Activated CD4-positive, alpha-beta T cell treated with anti-CD3 and anti-CD28 coated beads, Interleukin-2, amount 10 ng/mL, durations not matched to agents 24 days and 14 days (primary cell): ENCODE measurements at regions of chr3 and their contacts with region 1.

Region 1: GRCh38 chr3:30548600-30548999 is 57.8 kb upstream of the TGFBR2 start:
- DNase-seq: peak; percentile 68
- H3K4me3 Mint-ChIP-seq: no peak overlapping the region
- H3K27ac Mint-ChIP-seq: no peak overlapping the region
- H3K4me1 Mint-ChIP-seq: peaks cover 10% of the 10 kb centered on the region
- H3K27me3 Mint-ChIP-seq: no peaks in the 10 kb centered on the region

Region 2: DNA sequence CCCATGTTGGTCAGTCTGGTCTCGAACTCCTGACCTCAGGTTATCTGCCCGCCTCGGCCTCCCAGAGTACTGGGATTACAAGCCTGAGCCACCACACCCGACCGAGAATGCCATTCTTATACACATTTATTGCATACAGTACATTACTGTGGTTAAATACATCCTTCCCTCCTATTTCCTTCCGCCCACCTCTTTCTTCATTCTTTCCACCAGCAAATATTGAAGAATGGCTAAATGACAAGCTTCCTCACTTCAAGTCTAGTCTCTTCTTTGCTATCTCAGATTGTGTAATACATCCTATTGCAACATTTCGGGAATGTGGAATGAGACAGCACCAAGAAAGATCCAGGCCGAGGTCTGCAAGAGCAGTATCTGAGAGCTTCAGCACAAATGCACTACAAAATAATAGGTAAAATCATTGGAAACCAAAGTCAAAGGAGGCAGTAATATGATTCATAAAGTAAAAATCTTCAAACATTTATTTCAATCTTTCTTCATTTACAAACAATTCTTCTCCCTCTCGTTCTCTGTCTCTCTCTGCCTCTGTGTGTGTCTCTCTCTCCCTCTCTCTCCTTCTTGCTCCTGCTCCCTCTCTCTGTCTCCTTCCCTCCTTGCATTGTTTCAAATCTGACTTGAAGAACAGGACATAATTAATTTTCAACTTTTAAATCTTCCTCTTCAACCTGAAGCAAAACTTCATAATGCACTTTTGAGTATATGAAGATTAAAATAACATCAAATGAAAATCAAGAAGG is 36.9 kb before region 1 on chr3:
- intact Hi-C with region 1: loop called (anchors 5 kb)
- DNase-seq: no peak
- H3K4me3 Mint-ChIP-seq: no peak overlapping the region
- H3K27ac Mint-ChIP-seq: peak overlapping the region; percentile 31
- H3K4me1 Mint-ChIP-seq: peaks cover 10% of the 10 kb centered on the region
- H3K27me3 Mint-ChIP-seq: no peaks in the 10 kb centered on the region